CD4-positive, alpha-beta T cell (primary cell): ENCODE measurements at regions of chr17 and their contacts with region 1.

Region 1: DNA sequence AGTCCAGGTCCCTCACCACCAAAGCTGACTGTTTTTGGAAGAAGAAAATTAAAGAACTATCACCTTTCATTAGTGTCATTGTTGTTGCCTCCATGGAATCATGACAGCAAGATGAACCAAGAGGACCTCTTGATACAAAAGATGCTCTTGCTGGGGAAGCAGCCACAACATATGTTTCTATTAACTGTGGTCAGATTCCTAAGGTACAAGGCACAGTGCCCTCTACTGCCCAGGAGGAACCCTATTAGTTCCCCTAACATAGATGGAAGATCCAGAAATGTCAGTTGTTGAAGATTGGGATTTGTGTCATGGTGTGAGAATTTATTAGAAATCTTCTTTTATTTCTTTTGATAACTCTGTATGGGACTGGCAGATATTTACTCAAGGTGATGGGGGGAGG is 188.2 kb upstream of the ANKFN1 start:
- DNase-seq: no peak
- ATAC-seq: no peak
- H3K4me3 ChIP-seq: no peak overlapping the region
- H3K4me3 Mint-ChIP-seq: no peak overlapping the region
- H3K27ac ChIP-seq: no peak overlapping the region
- H3K27ac Mint-ChIP-seq: no peak overlapping the region
- H3K4me1 ChIP-seq: no peaks in the 10 kb centered on the region
- H3K4me1 Mint-ChIP-seq: no peaks in the 10 kb centered on the region
- H3K27me3 ChIP-seq: peaks cover 0 to 2% of the 10 kb centered on the region in 2 experiments
- H3K27me3 Mint-ChIP-seq: no peaks in the 10 kb centered on the region
- CTCF ChIP-seq: no peak

Region 2: GRCh38 chr17:55794725-55795482 is 170.1 kb before region 1 on chr17:
- CTCF ChIA-PET with region 1: no interaction called
- POLR2A ChIA-PET with region 1: no interaction called
- intact Hi-C with region 1: no loop called
- DNase-seq: no peak
- ATAC-seq: no peak
- H3K4me3 ChIP-seq: no peak overlapping the region
- H3K4me3 Mint-ChIP-seq: no peak overlapping the region
- H3K27ac ChIP-seq: no peak overlapping the region
- H3K27ac Mint-ChIP-seq: no peak overlapping the region
- H3K4me1 ChIP-seq: no peaks in the 10 kb centered on the region
- H3K4me1 Mint-ChIP-seq: no peaks in the 10 kb centered on the region
- H3K27me3 ChIP-seq: peaks cover 0 to 6% of the 10 kb centered on the region in 2 experiments
- H3K27me3 Mint-ChIP-seq: no peaks in the 10 kb centered on the region
- CTCF ChIP-seq: no peak

Region 3: GRCh38 chr17:55926276-55926990 is 38.6 kb before region 1 on chr17:
- CTCF ChIA-PET with region 1: no interaction called
- POLR2A ChIA-PET with region 1: no interaction called
- intact Hi-C with region 1: loop called in 1 of 2 experiments (anchors 5 kb)
- DNase-seq: peak in 2 of 14 experiments; percentile 7 to 8
- ATAC-seq: peak; percentile 63
- H3K4me3 ChIP-seq: no peak overlapping the region
- H3K4me3 Mint-ChIP-seq: no peak overlapping the region
- H3K27ac ChIP-seq: no peak overlapping the region
- H3K27ac Mint-ChIP-seq: peak overlapping the region; percentile 70
- H3K4me1 ChIP-seq: no peaks in the 10 kb centered on the region
- H3K4me1 Mint-ChIP-seq: peaks cover 17% of the 10 kb centered on the region
- H3K27me3 ChIP-seq: no peaks in the 10 kb centered on the region
- H3K27me3 Mint-ChIP-seq: no peaks in the 10 kb centered on the region
- CTCF ChIP-seq: no peak